Posterior vena cava (tissue), 2 donors: ENCODE measurements at regions of chr5 and their contacts with region 1.

Region 1: DNA sequence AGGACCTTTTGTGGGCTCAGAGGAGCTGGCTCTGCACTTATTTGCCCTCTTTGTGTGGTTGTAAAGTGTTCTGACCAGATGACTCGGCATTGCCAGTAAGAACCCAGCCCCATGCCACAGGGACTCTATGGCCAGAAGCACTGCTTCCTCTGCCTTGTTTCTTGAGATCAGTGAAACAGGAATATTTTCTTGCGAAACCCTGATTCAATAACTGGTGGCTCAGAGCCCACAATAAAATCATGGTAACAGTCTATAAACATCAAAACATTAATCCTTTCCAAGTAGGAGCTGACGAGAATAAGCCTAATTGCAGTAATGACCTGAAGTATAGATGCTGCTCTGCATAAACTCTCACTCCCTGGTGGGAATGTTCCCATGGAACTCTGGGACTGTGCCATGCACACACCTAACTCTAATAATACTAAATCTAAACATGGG is 344.3 kb downstream of the ZNF608 start:
- DNase-seq: no peak

Region 2: GRCh38 chr5:124453221-124454051 is 51.3 kb after region 1 on chr5:
- intact Hi-C with region 1: no loop called
- DNase-seq: no peak

Region 3: GRCh38 chr5:125129151-125129806 is 727.1 kb after region 1 on chr5:
- intact Hi-C with region 1: loop called in 1 of 2 experiments (anchors 2 kb)
- DNase-seq: no peak

Region 4: DNA sequence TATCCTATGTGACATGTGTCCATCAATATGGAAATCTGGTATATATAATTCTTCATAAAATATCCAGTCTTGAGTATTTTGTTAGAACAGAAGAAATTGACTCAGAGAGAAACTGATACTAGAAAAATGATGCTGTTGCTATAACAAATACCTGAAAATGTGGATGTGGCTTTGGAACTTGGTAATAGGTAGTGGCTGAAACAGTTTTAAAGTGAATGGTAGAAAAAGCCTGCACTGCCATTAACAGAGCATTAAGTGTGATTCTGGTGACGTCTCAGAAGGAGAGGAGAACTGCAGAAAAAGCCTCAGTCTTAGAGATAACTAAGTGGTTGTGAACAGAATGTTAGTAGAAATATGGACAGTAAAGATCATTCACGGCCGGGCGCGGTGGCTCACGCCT is 979.1 kb after region 1 on chr5:
- intact Hi-C with region 1: loop called in 1 of 2 experiments (anchors 5 kb)
- DNase-seq: no peak